ENCODE measurements at regions of chr5 and their contacts with region 1.

Region 1: DNA sequence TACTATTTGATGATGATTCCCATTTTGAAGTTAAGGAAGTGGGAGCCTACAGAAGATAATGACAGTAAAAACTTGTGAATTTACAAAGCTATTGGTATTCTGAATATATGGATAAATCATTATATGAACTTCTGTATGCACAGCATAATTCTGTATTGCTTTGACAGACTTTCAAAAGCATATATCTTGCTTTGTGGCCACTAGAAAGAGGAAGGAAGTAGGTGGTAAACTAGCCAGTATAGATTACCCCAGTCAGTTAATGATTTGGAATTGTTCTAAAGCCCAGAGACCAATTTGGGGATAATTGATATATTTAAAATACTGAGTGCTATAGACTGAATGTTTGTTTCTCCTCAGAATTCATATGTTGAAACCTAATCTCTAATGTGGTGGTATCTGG is 53.0 kb downstream of the NR2F1 start:
- DNase-seq: no peak
- H3K4me3 ChIP-seq: no peak overlapping the region
- H3K27ac ChIP-seq: no peak overlapping the region
- H3K4me1 ChIP-seq: no peaks in the 10 kb centered on the region
- H3K27me3 ChIP-seq: no peaks in the 10 kb centered on the region
- CTCF ChIP-seq: no peak

Region 2: DNA sequence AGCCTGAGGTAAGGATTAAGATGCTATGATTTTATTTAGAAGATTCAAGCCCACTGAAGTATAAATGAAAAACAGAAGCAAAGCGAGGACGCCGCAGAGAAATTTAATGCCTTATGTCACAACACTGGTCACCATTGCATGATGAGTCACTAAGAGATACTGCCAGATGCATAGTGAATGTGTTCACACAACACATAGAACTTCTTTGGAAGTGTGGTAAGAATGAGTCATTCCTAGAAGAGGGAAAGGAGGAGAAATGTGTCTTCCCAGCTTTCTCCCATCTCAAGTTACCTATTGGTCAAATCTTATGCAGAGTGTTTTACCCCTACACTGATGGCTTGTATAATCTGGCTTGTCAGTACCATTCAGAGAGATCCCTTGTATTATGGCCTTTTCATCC is 1787.5 kb before region 1 on chr5:
- intact Hi-C with region 1: loop called (anchors 5 kb)
- DNase-seq: no peak
- H3K4me3 ChIP-seq: no peak overlapping the region
- H3K27ac ChIP-seq: no peak overlapping the region
- H3K4me1 ChIP-seq: no peaks in the 10 kb centered on the region
- H3K27me3 ChIP-seq: no peaks in the 10 kb centered on the region
- CTCF ChIP-seq: no peak

Region 3: DNA sequence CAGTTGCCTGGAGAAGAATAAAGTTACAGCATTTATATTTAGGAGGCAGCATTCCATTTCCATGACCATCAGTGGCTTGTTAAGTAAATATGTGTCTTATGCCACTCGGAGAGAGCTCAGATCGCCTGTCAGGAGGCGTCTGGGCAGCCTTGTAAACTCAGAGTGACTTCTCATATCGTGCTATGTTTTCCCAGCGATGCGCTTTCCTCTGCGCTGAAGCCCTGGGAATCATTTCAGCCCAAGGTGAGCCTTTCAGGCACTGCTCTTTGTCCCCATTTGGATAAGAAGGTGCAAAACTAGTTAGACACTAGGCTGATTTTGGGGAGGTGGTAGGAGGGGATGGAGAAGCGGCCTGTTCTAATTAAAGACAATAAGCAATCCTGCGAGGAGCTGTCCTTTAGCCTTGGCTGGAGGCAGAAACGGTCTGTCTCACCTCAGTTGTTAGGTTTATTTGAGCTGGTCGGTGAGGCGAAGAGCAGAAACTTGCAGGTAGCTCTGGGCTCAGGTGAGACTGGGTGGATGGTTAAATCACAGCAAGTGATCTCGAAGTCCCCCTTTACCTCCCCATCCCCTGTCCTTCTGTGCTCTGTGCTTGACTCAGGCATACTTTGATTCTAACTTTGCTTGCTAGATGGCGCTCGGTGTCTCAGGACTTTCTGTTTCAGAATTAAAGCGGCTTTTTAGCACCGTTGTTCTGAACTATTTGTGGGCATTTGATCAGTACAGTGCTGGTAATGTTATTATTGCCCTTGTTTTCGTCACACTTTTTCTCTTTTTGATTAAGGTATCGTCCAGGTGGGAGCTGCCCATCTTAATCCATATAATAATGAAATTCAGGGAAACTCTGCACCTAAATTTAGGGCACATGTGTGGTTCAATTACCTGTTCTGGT is 28.4 kb before region 1 on chr5:
- intact Hi-C with region 1: loop called (anchors 2 kb)
- DNase-seq: no peak
- H3K4me3 ChIP-seq: no peak overlapping the region
- H3K27ac ChIP-seq: no peak overlapping the region
- H3K4me1 ChIP-seq: peaks cover 0 to 28% (median 16%) of the 10 kb centered on the region in 4 donors
- H3K27me3 ChIP-seq: peaks cover 4 to 94% of the 10 kb centered on the region in 2 donors
- CTCF ChIP-seq: peak; percentile 26 to 35